OCI-LY7 (cell line): ENCODE measurements at regions of chr16 and their contacts with region 1.

Region 1: GRCh38 chr16:87864331-87864989 is 4.8 kb downstream of the SLC7A5 start:
- DNase-seq: no peak
- H3K4me3 ChIP-seq: peak overlapping the region; percentile 99
- H3K27ac ChIP-seq: peak overlapping the region; percentile 5
- H3K4me1 ChIP-seq: peaks cover 56% of the 10 kb centered on the region
- CTCF ChIP-seq: no peak

Region 2: DNA sequence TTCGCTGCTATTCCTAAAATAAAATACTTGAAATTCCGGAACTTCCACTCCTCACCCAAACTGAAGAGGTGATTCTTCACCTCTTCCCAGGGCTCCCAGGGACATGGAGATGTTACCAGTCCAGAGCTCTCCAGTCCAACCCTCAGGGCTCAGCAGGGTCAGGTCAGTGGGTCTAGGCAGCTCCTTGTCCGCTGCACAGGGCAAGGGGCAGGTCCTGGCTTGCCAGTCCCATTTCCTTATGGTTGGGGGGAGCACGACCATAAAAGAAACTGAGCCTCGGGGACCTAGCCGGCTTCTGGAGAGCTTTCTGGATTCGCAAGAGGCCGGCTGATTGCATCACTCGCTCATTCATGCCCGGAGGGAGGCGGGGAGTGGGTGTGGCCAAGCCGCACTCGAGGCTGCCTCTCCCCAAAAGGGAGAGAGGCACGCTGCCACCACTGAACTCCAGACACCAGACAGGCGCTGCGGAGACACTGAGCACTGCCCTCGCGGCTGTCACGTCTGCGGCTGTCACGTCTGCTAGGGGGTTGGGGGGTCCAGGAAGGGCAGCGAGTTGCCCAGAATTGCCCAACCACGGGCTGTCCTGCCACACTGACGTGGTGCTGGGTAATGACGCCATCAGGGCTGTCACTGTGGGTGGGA is 10.9 kb before region 1 on chr16:
- CTCF ChIA-PET with region 1: interaction called, 4 read pairs
- POLR2A ChIA-PET with region 1: interaction called, 7 read pairs
- intact Hi-C with region 1: loop called (anchors 1 kb)
- DNase-seq: peak; percentile 95
- H3K4me3 ChIP-seq: peak overlapping the region; percentile 53
- H3K27ac ChIP-seq: peak overlapping the region; percentile 85
- H3K4me1 ChIP-seq: peaks cover 91% of the 10 kb centered on the region
- CTCF ChIP-seq: no peak

Region 3: GRCh38 chr16:87895641-87896141 is 31.2 kb after region 1 on chr16:
- CTCF ChIA-PET with region 1: no interaction called
- POLR2A ChIA-PET with region 1: no interaction called
- intact Hi-C with region 1: no loop called
- DNase-seq: peak; percentile 19
- H3K4me3 ChIP-seq: no peak overlapping the region
- H3K27ac ChIP-seq: no peak overlapping the region
- H3K4me1 ChIP-seq: peaks cover 37% of the 10 kb centered on the region
- CTCF ChIP-seq: no peak